ENCODE measurements at regions of chr1 and their contacts with region 1.

Region 1: DNA sequence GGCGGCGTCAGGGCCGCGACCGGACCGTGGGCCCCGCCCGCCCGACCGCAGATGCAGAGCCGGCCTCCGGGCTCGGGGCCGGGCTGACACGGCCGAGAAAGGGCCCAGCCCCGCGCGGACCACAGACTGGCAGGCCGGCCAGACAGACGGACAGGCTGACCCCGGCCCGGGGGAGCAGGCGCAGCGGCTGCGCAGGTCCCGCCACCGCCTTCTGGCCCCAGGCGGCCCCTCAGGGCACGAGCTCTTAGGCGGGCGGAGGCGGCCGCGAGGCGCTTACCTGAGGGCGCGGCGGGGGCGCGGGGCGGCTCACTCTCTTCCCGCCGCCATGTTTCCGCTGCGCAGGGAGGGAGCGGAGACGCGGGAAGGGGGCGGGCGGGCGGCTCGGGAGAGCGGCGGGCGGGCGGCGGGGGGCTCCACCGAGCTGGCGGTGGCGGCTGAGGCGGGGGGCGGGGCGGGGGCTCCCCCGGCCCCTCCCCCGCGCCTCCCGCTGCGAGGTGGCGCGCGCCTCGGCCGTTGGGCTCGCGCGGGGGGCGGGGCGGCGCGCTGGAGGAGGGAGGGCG is at the start of gene SCMH1:
- DNase-seq: peak; percentile 72
- H3K4me3 ChIP-seq: peak within 1 kb of the TSS; percentile 78
- H3K27ac ChIP-seq: peak within 1 kb of the TSS; percentile 87
- H3K4me1 ChIP-seq: peaks cover 37% of the 10 kb centered on the region
- H3K27me3 ChIP-seq: no peaks in the 10 kb centered on the region
- CTCF ChIP-seq: no peak
- total RNA-seq, gene SCMH1: 30.4 and 37.8 TPM in 2 replicates

Region 2: DNA sequence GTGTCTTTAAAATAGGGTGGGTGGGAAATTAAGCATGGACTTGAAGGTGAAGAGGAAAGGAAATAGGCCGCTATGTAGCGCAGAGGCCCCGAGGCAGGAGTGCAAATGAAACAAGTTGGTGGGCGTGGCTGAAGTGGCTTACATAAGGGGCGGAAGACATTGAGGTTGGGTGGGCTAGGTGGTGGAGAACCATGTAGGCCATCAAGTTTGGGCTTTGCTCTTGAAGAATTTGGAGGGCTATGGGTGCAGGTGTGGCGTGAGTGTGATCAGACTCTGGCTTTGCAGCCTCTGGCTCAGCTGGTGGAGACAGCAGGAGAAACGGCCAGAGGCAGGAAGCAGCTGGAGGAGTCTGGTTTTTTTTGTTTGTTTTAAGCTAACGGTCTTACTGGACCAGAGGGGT is 227.0 kb before region 1 on chr1:
- CTCF ChIA-PET with region 1: no interaction called
- POLR2A ChIA-PET with region 1: no interaction called
- intact Hi-C with region 1: loop called (anchors 5 kb)
- DNase-seq: no peak
- H3K4me3 ChIP-seq: no peak overlapping the region
- H3K27ac ChIP-seq: no peak overlapping the region
- H3K4me1 ChIP-seq: no peaks in the 10 kb centered on the region
- H3K27me3 ChIP-seq: no peaks in the 10 kb centered on the region
- CTCF ChIP-seq: no peak